ENCODE measurements at regions of chr4 and their contacts with region 1.

Region 1: DNA sequence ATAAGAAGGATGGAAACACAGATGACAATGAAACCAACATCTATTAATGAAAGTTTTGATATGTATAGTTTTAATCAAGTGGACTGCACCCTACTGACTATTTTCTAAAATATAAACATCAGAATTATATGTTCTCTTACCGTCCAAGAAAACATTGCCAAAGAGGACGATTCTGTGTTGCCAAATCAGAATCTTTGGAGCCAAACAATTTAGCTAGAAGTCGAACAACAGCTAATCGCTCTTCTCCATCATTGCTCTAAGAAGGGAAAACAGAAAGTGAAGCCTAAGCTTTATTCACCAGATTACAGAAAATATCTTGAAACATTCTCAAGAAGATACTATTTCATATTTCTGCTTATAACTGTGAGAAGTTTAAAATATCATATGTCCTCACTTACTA is 64.2 kb downstream of the PDS5A start:
- DNase-seq: no peak
- ATAC-seq: no peak
- H3K4me3 ChIP-seq: no peak overlapping the region
- H3K27ac ChIP-seq: no peak overlapping the region
- H3K4me1 ChIP-seq: no peaks in the 10 kb centered on the region
- H3K27me3 ChIP-seq: no peaks in the 10 kb centered on the region
- CTCF ChIP-seq: no peak

Region 2: DNA sequence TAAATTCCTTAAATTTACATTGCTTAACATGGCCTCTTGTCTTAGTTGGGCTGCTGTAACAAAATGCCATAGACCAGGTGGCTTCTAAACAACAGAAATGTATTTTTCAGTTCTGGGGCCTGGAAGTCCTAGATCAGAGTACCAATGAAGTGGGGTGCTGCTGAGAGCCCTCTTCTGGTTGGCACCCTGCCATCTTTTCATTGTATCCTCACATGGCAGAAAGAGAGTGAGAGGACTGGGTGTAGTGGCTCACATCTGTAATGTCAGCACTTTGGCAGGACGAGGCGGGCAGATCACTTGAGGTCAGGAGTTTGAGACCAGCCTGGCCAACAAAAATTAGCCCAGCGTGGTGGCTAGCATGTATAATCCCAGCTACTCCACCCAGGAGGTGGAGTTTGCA is 518.8 kb before region 1 on chr4:
- intact Hi-C with region 1: no loop called
- DNase-seq: no peak
- ATAC-seq: no peak
- H3K4me3 ChIP-seq: no peak overlapping the region
- H3K27ac ChIP-seq: no peak overlapping the region
- H3K4me1 ChIP-seq: no peaks in the 10 kb centered on the region
- H3K27me3 ChIP-seq: peaks cover 0 to 5% (median 0%) of the 10 kb centered on the region in 3 donors
- CTCF ChIP-seq: no peak

Region 3: DNA sequence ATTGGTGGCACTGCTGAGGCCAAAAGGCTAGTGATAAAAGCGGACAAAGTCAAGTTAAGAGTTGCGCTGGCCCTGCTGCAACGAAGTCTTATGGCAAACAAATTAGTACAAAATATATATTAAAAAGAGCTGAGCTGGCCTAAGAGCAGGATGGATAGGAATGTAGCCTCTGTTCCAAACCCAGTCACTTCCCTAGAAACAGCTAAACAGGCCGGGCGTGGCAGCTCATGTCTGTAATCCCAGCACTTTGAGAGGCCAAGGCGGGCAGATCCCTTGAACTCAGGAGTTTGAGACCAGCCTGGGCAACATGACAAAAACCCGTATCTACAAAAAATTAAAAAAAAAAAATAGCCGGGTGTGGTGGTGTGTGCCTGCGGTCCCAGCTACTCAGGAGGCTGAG is 353.8 kb before region 1 on chr4:
- intact Hi-C with region 1: loop called in 1 of 2 experiments (anchors 10 kb)
- DNase-seq: no peak
- ATAC-seq: no peak
- H3K4me3 ChIP-seq: no peak overlapping the region
- H3K27ac ChIP-seq: no peak overlapping the region
- H3K4me1 ChIP-seq: no peaks in the 10 kb centered on the region
- H3K27me3 ChIP-seq: no peaks in the 10 kb centered on the region
- CTCF ChIP-seq: no peak